Motor neuron (in vitro differentiated cells): ENCODE measurements at regions of chr1 and their contacts with region 1.

Region 1: DNA sequence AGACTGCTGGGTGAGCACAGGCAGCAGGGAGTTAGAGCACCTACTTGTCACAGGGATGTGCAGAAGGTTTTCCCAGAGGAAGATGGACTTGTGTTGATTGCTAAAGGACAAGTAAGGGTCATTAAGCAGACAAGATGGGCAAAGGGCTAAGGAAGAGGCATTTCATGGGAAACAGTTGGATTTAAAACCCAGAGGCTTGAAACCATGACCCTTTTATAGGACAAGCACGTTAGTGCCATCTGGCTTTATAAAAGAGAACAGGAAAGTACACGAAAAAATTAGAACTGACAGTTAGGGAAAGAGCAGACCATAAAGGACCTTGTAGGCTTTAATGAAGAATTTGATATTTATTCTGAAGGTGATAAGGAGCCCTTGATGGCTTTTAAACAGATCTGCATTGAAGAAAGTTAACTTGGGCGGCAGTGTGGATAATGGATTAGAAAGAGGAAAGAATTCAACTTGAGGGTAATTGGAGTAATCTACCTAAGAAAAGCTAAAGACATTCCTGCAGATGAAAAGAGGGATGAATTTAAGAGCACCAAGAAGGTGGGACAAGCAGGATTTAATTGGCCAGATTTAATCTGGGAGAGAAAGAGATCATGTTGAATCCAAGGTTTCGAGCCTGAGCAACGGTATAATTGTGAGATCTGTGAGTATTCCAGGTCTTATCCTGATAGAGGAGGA is 68.6 kb downstream of the ZC3H11B start:
- ATAC-seq: peak in 1 of 8 experiments; percentile 16
- H3K4me3 ChIP-seq: no peak overlapping the region
- H3K27ac ChIP-seq: no peak overlapping the region
- H3K4me1 ChIP-seq: no peaks in the 10 kb centered on the region

Region 2: DNA sequence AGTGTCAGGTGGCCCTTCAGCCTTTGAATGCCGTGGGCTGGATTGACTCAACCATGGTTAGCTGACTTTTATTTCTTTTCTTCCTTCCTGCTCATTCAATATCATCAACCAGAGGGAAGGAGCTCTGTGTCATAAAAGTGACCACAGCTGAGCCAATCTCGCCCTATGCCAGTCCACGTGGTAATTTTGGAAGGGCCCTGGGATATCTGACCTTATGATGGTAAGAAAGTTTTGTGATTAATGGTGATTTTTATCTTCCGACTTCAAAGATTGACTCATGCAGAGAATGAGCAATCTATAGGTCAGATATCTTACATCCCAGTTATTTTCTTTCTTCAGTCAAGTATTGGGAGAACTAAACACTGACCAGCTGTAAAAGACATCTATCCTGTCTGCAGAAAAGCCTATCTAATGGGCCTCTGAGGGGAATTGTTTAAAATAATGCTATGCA is 101.7 kb before region 1 on chr1:
- in situ Hi-C with region 1: loop called in 1 of 9 experiments (anchors 25 kb)
- ATAC-seq: no peak
- H3K4me3 ChIP-seq: no peak overlapping the region
- H3K27ac ChIP-seq: no peak overlapping the region
- H3K4me1 ChIP-seq: no peaks in the 10 kb centered on the region

Region 3: DNA sequence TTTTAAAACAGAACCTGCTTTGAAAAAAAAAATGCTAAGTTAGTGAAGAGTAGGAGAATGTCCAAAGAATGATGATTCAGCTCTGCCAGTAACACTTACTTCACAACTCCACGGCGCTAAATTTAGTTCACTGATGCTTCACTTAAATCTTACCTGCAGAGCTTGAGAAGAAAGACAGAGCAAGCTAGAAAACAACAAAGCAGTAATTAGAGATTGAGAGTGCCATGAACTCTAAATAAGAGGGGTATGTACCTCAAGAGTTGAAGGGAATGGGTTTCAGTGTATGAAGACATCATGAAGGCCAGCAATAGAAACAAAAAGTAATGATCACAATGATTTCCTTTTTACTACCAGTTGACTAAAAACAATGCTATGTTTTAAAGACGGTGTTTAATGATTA is 469.2 kb after region 1 on chr1:
- in situ Hi-C with region 1: no loop called
- ATAC-seq: peak in 2 of 8 experiments; percentile 28 to 60
- H3K4me3 ChIP-seq: no peak overlapping the region
- H3K27ac ChIP-seq: no peak overlapping the region
- H3K4me1 ChIP-seq: no peaks in the 10 kb centered on the region